Panc1 (cell line): ENCODE measurements at regions of chr1 and their contacts with region 1.

Region 1: DNA sequence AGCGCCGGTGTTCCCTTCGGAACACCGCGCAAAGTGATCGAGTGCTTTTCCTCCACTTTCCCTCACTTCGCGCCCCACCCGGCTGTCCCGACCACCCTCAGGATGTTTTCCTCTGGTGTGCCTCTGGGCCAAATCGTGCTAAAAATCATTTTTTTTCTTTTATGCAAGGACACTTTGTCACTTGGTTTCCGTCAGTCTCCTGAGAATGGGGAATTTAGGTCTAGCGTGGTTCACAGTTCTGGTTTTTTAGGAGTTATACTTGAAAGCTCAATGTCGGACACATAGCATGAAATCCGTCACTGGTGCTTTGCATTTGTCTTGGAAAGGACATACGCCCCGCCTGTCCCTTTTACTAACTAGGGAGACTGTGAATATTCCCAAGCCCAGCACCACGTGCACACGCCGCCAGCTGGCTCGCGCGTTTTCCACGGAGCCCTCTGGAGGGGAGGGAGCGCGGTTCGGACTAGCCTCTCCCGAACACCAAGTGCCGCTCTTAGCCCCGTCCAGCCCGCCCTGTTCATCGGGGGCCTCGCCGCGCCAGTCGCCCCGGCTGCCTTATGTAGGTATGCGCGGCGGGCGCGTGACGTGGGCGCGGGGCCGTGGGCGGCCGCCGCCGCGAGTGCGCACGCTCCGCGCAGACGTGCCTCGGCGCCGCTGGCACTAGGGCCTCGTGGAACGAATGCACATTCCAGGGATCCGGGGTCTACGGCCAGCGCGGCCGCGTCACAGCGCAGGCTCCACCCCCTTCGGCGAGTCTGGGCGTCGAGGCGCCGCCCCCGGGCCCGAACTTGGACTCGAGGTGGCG is 572 bp upstream of the IRF2BP2 start:
- DNase-seq: no peak
- ATAC-seq: peak; percentile 67
- H3K4me3 ChIP-seq: peak overlapping the region; percentile 54 to 74
- H3K27ac ChIP-seq: peak overlapping the region; percentile 100
- H3K4me1 ChIP-seq: peaks cover 42% of the 10 kb centered on the region
- H3K27me3 ChIP-seq: no peaks in the 10 kb centered on the region
- CTCF ChIP-seq: no peak

Region 2: GRCh38 chr1:233598891-233599541 is 1011.5 kb before region 1 on chr1:
- CTCF ChIA-PET with region 1: no interaction called
- POLR2A ChIA-PET with region 1: no interaction called
- in situ Hi-C with region 1: no loop called
- intact Hi-C with region 1: no loop called
- DNase-seq: no peak
- ATAC-seq: no peak
- H3K4me3 ChIP-seq: no peak overlapping the region
- H3K27ac ChIP-seq: no peak overlapping the region
- H3K4me1 ChIP-seq: no peaks in the 10 kb centered on the region
- H3K27me3 ChIP-seq: peaks cover 9% of the 10 kb centered on the region
- CTCF ChIP-seq: no peak

Region 3: DNA sequence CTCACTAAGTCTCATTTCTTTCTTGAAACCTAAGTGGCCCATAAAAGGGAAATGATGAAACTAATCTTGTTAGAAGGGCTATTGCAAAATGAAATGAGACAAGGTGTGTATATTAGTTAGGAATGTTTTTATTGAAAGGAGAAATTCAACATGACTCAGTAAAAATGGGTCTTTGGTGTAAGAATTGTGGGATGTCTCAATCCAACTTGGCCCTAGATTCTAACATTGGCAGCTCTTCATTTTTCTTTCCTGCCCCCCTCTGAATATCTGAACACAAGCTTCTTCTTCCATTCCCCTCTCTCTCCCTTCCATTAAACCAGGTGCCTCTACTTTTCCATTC is 104.8 kb before region 1 on chr1:
- CTCF ChIA-PET with region 1: no interaction called
- POLR2A ChIA-PET with region 1: no interaction called
- in situ Hi-C with region 1: no loop called
- intact Hi-C with region 1: no loop called
- DNase-seq: no peak
- ATAC-seq: no peak
- H3K4me3 ChIP-seq: no peak overlapping the region
- H3K27ac ChIP-seq: peak overlapping the region; percentile 8; the same call in 1 of the 2 replicates
- H3K4me1 ChIP-seq: peaks cover 15% of the 10 kb centered on the region
- H3K27me3 ChIP-seq: no peaks in the 10 kb centered on the region
- CTCF ChIP-seq: no peak

Region 4: DNA sequence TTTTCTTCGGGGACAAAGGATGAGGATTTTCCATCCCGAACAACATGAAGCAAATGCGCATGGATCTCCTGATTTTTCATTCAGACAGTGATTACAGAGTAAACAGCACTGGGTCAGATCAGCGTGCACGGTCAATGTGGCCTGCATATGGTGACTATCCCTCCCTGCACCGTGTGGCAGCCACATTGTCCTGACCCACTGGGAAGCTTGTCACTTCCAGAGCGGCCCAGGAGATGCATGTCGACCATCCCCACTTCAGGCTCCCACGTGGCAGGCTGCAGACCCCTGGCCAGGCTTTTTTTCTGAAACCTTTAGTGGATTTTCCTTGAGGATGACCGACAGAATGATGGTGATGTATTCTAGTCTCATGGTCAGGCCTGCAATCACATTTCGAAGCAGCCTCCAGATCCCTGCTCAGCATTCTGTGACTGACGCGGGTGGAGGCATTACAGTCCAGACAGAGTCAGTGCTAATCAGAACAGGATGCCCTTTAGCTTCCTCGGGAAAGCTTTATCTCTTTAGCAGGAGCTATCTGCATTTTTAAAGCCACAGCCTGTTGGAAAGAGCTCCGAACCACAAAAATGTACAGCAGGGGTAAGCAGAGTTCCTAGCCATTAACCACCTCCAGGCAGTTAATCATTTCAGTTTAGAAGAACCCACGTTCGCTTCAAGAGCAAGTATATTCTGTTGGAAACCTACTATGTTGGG is 57.2 kb before region 1 on chr1:
- CTCF ChIA-PET with region 1: no interaction called
- POLR2A ChIA-PET with region 1: no interaction called
- in situ Hi-C with region 1: no loop called
- intact Hi-C with region 1: no loop called
- DNase-seq: no peak
- ATAC-seq: no peak
- H3K4me3 ChIP-seq: no peak overlapping the region
- H3K27ac ChIP-seq: no peak overlapping the region
- H3K4me1 ChIP-seq: peaks cover 3% of the 10 kb centered on the region
- H3K27me3 ChIP-seq: no peaks in the 10 kb centered on the region
- CTCF ChIP-seq: no peak

Region 5: GRCh38 chr1:234722904-234723720 is 112.6 kb after region 1 on chr1:
- CTCF ChIA-PET with region 1: interaction called, 4 read pairs
- POLR2A ChIA-PET with region 1: interaction called, 38 read pairs
- in situ Hi-C with region 1: no loop called
- intact Hi-C with region 1: loop called (anchors 2 kb)
- DNase-seq: peak; percentile 88
- ATAC-seq: peak; percentile 5; the same call in 1 of the 2 replicates
- H3K4me3 ChIP-seq: peak overlapping the region in 1 of 2 experiments; percentile 4; a peak in 1 of 4 replicates
- H3K27ac ChIP-seq: peak overlapping the region; percentile 95
- H3K4me1 ChIP-seq: peaks cover 82% of the 10 kb centered on the region
- H3K27me3 ChIP-seq: no peaks in the 10 kb centered on the region
- CTCF ChIP-seq: no peak

Region 6: GRCh38 chr1:234875953-234876855 is 265.7 kb after region 1 on chr1:
- CTCF ChIA-PET with region 1: no interaction called
- POLR2A ChIA-PET with region 1: no interaction called
- in situ Hi-C with region 1: no loop called
- intact Hi-C with region 1: loop called (anchors 10 kb)
- DNase-seq: no peak
- ATAC-seq: peak; percentile 75
- H3K4me3 ChIP-seq: no peak overlapping the region
- H3K27ac ChIP-seq: peak overlapping the region; percentile 90
- H3K4me1 ChIP-seq: peaks cover 54% of the 10 kb centered on the region
- H3K27me3 ChIP-seq: no peaks in the 10 kb centered on the region
- CTCF ChIP-seq: no peak

Region 7: DNA sequence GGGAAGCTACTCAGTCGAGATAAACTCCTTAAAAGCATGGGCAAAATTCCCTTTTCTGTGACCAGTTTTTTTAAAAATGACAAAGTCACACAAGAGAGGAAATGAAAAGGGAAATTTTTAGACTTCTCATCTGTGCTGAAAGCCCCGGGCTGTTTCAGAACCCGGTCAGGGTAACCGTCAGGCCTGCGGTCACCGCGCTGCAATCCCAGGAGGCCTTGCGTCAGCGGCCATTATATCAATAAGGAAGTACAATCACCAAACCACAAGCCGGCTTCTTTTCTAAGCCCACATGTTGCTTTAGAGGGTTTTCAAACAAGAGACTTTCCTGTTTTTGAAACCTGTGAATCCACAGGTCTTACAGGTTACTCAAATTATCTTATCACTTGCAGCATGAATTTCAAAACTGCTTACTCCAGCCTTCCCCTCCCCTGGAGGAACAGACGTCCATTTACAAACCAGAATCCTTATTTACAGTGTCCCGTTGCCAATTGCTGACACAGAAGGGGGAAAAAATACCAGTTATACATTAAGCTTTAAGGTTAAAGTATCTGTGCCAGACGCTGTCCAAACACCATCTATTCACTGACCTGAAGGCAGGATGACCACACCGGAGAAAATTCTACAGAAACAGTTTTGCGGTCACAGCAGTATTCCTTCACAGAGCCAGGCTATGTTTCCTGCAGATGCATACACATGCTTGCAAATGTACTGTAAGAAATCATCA is 352.8 kb after region 1 on chr1:
- CTCF ChIA-PET with region 1: interaction called, 3 read pairs
- POLR2A ChIA-PET with region 1: interaction called, 5 read pairs
- in situ Hi-C with region 1: loop called (anchors 25 kb)
- intact Hi-C with region 1: loop called (anchors 2 kb)
- DNase-seq: no peak
- ATAC-seq: peak; percentile 54
- H3K4me3 ChIP-seq: peak overlapping the region in 1 of 2 experiments; percentile 29; a peak in 2 of 4 replicates
- H3K27ac ChIP-seq: peak overlapping the region; percentile 100
- H3K4me1 ChIP-seq: peaks cover 71% of the 10 kb centered on the region
- H3K27me3 ChIP-seq: no peaks in the 10 kb centered on the region
- CTCF ChIP-seq: no peak

Region 8: DNA sequence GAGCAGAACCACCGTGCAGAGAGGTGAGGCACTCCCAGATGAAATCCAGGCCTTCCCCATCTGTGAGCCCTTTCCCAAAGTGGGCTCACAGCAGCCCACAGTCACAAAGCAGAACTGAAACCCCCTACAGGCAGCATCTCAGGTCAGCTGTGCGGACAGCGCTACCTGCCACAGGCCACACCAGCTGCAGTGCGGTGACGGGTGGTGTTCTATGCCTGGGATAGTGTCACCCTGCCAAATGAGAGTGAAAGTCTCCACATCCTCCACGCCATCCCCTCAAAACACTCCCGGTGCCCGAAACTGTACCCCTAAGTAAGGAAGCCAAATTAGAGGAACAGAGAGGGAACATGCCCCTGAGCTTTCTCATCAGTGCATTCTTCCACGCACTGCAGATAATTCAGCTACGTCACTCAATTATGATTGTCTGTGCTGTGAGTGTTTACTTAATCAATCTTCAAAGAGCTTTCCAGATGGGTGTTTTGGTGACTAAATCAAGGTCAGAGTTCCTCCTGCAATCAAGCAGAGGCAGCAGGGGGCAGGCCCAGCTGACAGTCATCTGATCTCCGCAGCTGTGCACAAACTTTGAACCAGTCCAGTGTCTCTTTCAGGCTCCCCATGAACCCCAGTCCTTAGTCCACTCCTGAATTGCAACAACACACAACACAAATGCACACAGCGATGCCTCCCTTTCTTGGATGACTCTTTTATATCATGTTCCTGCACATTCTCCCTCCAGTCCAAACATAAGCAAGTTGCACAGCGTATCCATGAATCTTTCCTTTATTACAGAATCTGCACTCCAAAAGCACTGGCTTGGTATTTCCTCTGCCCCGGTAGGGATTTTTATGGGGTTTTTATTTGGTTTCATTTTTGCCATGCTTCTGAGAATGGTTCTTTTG is 368.1 kb after region 1 on chr1:
- CTCF ChIA-PET with region 1: interaction called, 6 read pairs
- POLR2A ChIA-PET with region 1: interaction called, 5 read pairs
- in situ Hi-C with region 1: loop called (anchors 25 kb)
- intact Hi-C with region 1: loop called (anchors 5 kb)
- DNase-seq: no peak
- ATAC-seq: peak; percentile 66
- H3K4me3 ChIP-seq: peak overlapping the region in 1 of 2 experiments; percentile 3; a peak in 2 of 4 replicates
- H3K27ac ChIP-seq: peak overlapping the region; percentile 100
- H3K4me1 ChIP-seq: peaks cover 92% of the 10 kb centered on the region
- H3K27me3 ChIP-seq: no peaks in the 10 kb centered on the region
- CTCF ChIP-seq: no peak

Region 9: GRCh38 chr1:235093696-235094592 is 483.4 kb after region 1 on chr1:
- CTCF ChIA-PET with region 1: interaction called, 6 read pairs
- POLR2A ChIA-PET with region 1: interaction called, 3 read pairs
- in situ Hi-C with region 1: no loop called
- intact Hi-C with region 1: loop called (anchors 5 kb)
- DNase-seq: no peak
- ATAC-seq: peak; percentile 67
- H3K4me3 ChIP-seq: no peak overlapping the region
- H3K27ac ChIP-seq: peak overlapping the region; percentile 87
- H3K4me1 ChIP-seq: peaks cover 39% of the 10 kb centered on the region
- H3K27me3 ChIP-seq: no peaks in the 10 kb centered on the region
- CTCF ChIP-seq: peak; percentile 91